Motor neuron (in vitro differentiated cells): ENCODE measurements at regions of chr21 and their contacts with region 1.

Region 1: DNA sequence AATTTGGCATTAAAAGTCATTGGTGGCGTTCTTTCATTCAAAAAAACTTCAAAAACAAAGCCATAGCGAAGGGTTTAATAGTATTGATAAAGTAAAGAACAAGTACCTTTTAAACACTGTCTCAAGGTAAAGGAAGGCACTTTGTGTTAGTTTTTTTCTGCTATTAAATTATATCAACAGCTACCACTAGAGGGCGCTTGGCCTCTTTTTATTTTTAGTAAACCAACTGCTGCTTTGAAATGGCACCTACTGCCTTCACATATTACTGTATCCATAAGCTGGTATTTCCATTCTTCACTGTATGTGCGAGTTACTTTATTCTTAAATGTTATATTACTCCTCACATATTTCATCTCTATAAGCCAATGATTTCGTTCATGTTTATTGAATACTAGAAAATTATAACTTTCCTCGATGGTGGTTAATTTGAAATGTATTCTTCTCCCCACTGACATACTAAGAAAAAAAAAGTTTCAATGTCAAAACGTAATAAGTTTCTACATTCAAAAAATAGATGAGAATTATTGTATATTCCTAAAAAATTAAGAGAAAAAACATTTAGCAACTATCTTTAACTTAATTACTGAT is 125.7 kb upstream of the CXADR start:
- ATAC-seq: peak in 7 of 8 experiments; percentile 36 to 66 (median 50)
- H3K4me3 ChIP-seq: no peak overlapping the region
- H3K27ac ChIP-seq: no peak overlapping the region
- H3K4me1 ChIP-seq: peaks cover 0 to 6% of the 10 kb centered on the region in 2 donors

Region 2: DNA sequence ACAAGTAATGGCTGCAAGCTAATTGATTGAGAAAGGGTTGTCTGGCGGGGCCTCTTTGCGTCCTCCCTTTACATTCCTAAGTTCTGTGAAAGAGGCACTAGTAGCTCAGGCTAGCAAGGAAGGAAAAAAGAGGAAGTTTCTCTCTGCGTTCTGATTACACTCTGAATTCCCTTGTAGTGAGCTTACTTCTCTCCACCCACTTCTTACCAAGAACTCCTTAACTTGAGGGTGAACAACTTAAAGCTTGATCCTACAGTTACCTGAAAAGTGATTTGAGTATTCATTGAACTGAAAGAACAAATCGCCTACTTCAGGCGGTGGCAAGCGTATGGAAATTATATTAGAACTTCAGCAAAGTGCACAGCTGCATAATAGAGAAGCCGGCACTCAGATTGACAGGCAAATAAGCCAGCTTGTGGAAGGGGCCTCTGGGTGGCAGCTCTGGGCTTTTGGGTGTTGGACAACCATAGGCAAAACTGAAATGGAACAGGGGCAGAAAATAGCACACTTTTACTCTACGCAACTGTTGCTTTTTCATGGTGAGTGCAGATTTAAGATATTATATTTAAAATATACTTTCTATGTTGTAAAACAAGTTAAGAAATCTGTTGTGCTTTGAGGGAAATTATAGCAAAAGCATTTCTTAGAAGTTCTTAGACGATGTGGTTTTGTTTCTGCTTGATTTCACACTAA is 1192.9 kb before region 1 on chr21:
- in situ Hi-C with region 1: no loop called
- ATAC-seq: peak; percentile 71 to 93 (median 84)
- H3K4me3 ChIP-seq: peak overlapping the region; percentile 18 to 44 (median 30)
- H3K27ac ChIP-seq: peak overlapping the region; percentile 46 to 68
- H3K4me1 ChIP-seq: peaks cover 13 to 33% of the 10 kb centered on the region in 2 donors

Region 3: GRCh38 chr21:17003763-17004373 is 383.3 kb before region 1 on chr21:
- in situ Hi-C with region 1: no loop called
- ATAC-seq: no peak
- H3K4me3 ChIP-seq: no peak overlapping the region
- H3K27ac ChIP-seq: no peak overlapping the region
- H3K4me1 ChIP-seq: peaks cover 0 to 8% of the 10 kb centered on the region in 2 donors

Region 4: GRCh38 chr21:17512253-17513213 is 125.4 kb after region 1 on chr21 and contains the start of gene CXADR:
- in situ Hi-C with region 1: loop called in 2 of 9 experiments (anchors 25 kb)
- ATAC-seq: peak; percentile 78 to 93 (median 90)
- H3K4me3 ChIP-seq: peak within 1 kb of the TSS; percentile 78 to 93 (median 88)
- H3K27ac ChIP-seq: peak within 1 kb of the TSS; percentile 81 to 85
- H3K4me1 ChIP-seq: peaks cover 10 to 12% of the 10 kb centered on the region in 2 donors
- total RNA-seq, gene CXADR: 7.9 to 81.1 (median 63.1) TPM

Region 5: GRCh38 chr21:17554679-17555465 is 167.7 kb after region 1 on chr21:
- in situ Hi-C with region 1: loop called in 1 of 9 experiments (anchors 25 kb)
- ATAC-seq: peak; percentile 51 to 91 (median 82)
- H3K4me3 ChIP-seq: no peak overlapping the region
- H3K27ac ChIP-seq: peak overlapping the region in 1 of 2 donors; percentile 44
- H3K4me1 ChIP-seq: peaks cover 8 to 17% of the 10 kb centered on the region in 2 donors

Region 6: DNA sequence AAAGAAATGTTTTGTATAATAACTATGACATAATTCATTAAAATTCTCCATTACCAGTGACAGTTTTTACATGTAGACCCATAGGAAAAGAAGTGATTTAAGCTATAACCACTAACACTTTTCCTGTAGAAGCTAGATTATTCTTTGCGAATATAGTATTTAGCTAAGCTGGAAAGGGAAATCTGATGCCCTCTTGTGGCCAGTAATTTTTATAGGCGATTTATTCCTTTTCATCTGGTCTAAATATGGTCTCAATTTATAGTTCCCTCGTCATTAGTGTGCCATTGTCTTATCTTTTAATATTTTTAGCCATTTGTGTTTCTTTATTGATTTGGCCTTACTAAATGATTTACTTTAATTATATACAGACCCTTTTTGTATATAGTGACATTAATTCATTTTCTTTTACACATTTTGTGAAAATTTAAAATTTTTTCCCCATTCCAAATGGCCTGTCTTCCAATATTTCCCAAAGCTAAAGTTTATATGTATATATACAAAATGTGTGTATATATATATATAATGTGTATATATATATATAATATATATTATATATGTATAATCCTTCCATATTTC is 198.8 kb after region 1 on chr21:
- in situ Hi-C with region 1: loop called in 1 of 9 experiments (anchors 25 kb)
- ATAC-seq: peak in 4 of 8 experiments; percentile 32 to 74 (median 60)
- H3K4me3 ChIP-seq: no peak overlapping the region
- H3K27ac ChIP-seq: no peak overlapping the region
- H3K4me1 ChIP-seq: no peaks in the 10 kb centered on the region

Region 7: DNA sequence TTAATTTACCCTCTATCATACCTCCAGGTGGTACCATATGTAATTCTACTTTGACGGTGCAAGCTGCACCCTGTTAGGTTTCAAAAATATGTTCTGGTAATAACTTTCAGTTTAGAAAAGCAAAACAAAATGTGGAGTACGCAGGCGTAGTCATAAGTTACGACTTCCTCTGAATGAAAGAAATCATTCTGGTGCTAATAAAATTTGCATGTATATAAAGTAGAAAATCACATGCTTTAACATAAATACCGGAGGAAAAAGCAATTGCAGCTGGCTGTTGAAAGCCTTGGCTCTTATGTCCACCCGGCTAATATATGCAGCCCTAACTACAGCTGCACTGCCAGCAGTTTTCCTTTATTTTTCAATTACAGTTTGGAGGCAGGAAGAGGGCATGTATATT is 1081.7 kb after region 1 on chr21:
- in situ Hi-C with region 1: no loop called
- ATAC-seq: peak in 5 of 8 experiments; percentile 25 to 86 (median 34)
- H3K4me3 ChIP-seq: no peak overlapping the region
- H3K27ac ChIP-seq: no peak overlapping the region
- H3K4me1 ChIP-seq: peaks cover 0 to 6% of the 10 kb centered on the region in 2 donors